Heart left ventricle (tissue), 16 donors: ENCODE measurements at regions of chr7 and their contacts with region 1.

Region 1: DNA sequence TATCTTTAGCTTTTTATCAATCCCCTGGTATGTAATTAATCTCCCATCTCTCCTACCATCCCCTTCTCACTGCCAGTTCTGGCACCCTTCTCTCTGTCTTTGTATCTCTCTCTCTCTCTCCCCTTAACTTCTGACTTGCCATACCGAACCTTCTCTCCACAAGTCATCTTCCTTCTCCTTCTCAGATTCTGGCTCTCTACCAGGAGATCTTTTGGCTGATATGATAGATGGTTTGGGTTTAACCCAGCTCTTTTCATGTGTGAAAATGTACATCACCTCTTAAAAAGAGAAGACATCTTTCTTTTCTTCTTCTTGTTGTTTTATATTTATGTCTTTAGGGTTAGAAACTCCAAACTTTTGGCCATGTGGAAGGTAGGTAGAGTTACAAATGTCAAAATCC is 196.7 kb downstream of the HGF start:
- DNase-seq: no peak
- ATAC-seq: no peak
- H3K4me3 ChIP-seq: no peak overlapping the region
- H3K27ac ChIP-seq: no peak overlapping the region
- H3K4me1 ChIP-seq: no peaks in the 10 kb centered on the region
- H3K27me3 ChIP-seq: no peaks in the 10 kb centered on the region
- CTCF ChIP-seq: no peak
- POLR2A ChIP-seq: no peak

Region 2: DNA sequence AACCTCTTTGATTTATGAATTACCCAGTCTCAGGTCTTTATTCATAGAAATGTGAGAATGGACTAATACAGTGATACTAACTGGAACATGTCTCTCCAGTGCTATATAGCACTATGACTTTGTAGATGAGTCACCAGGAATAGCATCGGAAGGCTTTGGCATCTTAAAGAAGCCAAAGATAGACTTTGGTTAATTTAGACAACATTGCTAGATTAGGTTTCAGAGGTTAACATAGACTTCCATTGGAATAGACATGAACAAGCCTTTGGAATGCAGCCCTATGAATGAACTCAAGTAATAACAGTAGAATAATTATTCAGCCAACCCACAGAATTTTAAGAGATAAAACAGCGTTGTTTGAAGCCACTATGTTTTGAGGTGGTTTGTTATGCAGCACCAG is 27.5 kb after region 1 on chr7:
- intact Hi-C with region 1: loop called in 1 of 10 experiments (anchors 1 kb)
- DNase-seq: no peak
- ATAC-seq: no peak
- H3K4me3 ChIP-seq: no peak overlapping the region
- H3K27ac ChIP-seq: no peak overlapping the region
- H3K4me1 ChIP-seq: no peaks in the 10 kb centered on the region
- H3K27me3 ChIP-seq: no peaks in the 10 kb centered on the region
- CTCF ChIP-seq: no peak
- POLR2A ChIP-seq: no peak